Caco-2 (cell line): ENCODE measurements at regions of chrX and their contacts with region 1.

Region 1: DNA sequence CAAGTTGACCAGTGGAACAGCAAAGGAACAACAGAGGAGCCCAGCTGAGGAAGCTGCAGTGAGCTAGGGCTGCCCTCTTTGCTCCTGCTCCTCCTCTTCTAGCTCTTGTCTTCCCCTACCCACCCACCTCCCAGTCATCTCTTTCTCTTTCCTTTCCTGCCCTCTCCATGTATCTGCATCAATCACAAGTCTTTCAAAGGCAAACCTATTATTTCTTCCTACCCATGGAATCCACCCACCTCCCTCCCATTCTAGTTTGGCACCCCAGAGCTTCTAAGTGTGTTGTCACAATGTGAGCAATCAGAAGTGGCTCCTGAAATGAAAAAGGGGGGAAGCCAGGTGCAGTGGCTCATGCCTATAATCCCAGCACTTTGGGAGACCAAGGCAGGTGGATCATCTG is 69.3 kb downstream of the TSC22D3 start:
- DNase-seq: no peak
- H3K4me3 ChIP-seq: no peak overlapping the region
- H3K4me3 Mint-ChIP-seq: no peak overlapping the region
- H3K27ac Mint-ChIP-seq: no peak overlapping the region
- H3K4me1 ChIP-seq: no peaks in the 10 kb centered on the region
- H3K4me1 Mint-ChIP-seq: peaks cover 12% of the 10 kb centered on the region
- H3K27me3 ChIP-seq: no peaks in the 10 kb centered on the region
- H3K27me3 Mint-ChIP-seq: no peaks in the 10 kb centered on the region
- CTCF ChIP-seq: no peak

Region 2: GRCh38 chrX:106903291-106903824 is 803.0 kb before region 1 on chrX and contains the start of gene RIPPLY1:
- CTCF ChIA-PET with region 1: interaction called, 12 read pairs
- POLR2A ChIA-PET with region 1: no interaction called
- intact Hi-C with region 1: no loop called
- DNase-seq: no peak
- H3K4me3 ChIP-seq: no peak within 1 kb of the TSS
- H3K4me3 Mint-ChIP-seq: no peak within 1 kb of the TSS
- H3K27ac Mint-ChIP-seq: no peak within 1 kb of the TSS
- H3K4me1 ChIP-seq: peaks cover 40% of the 10 kb centered on the region
- H3K4me1 Mint-ChIP-seq: peaks cover 17% of the 10 kb centered on the region
- H3K27me3 ChIP-seq: no peaks in the 10 kb centered on the region
- H3K27me3 Mint-ChIP-seq: no peaks in the 10 kb centered on the region
- CTCF ChIP-seq: no peak
- total RNA-seq, gene RIPPLY1: not detected in 2 replicates

Region 3: GRCh38 chrX:107662145-107662544 is 44.2 kb before region 1 on chrX:
- CTCF ChIA-PET with region 1: no interaction called
- POLR2A ChIA-PET with region 1: no interaction called
- intact Hi-C with region 1: no loop called
- DNase-seq: no peak
- H3K4me3 ChIP-seq: no peak overlapping the region
- H3K4me3 Mint-ChIP-seq: no peak overlapping the region
- H3K27ac Mint-ChIP-seq: no peak overlapping the region
- H3K4me1 ChIP-seq: no peaks in the 10 kb centered on the region
- H3K4me1 Mint-ChIP-seq: no peaks in the 10 kb centered on the region
- H3K27me3 ChIP-seq: no peaks in the 10 kb centered on the region
- H3K27me3 Mint-ChIP-seq: no peaks in the 10 kb centered on the region
- CTCF ChIP-seq: no peak

Region 4: GRCh38 chrX:107678957-107679740 is 27.2 kb before region 1 on chrX:
- CTCF ChIA-PET with region 1: no interaction called
- POLR2A ChIA-PET with region 1: no interaction called
- intact Hi-C with region 1: no loop called
- DNase-seq: no peak
- H3K4me3 ChIP-seq: no peak overlapping the region
- H3K4me3 Mint-ChIP-seq: no peak overlapping the region
- H3K27ac Mint-ChIP-seq: no peak overlapping the region
- H3K4me1 ChIP-seq: 0 out of 2 replicates have a peak, but pooled peaks cover 6% of the 10 kb centered on the region
- H3K4me1 Mint-ChIP-seq: peaks cover 8% of the 10 kb centered on the region
- H3K27me3 ChIP-seq: no peaks in the 10 kb centered on the region
- H3K27me3 Mint-ChIP-seq: no peaks in the 10 kb centered on the region
- CTCF ChIP-seq: no peak

Region 5: DNA sequence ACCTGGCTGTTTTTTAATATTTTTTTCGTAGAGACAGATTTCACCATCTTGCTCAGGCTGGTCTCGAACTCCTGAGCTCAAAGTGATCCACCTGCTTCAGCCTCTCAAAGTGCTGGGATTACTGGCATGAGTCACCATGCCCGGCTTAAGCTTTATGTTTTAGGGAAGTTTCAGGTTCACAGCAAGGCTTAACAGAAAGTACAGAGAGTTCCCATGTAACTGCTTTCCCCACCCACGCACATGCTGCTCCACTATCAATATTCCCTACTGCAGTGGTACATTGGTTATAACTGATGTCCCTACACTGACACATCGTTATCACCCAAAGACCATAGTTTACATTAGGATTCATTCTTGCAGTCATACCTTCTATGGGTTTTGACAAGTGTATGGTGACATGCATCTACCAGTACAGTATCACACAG is 15.3 kb before region 1 on chrX:
- CTCF ChIA-PET with region 1: no interaction called
- POLR2A ChIA-PET with region 1: no interaction called
- intact Hi-C with region 1: no loop called
- DNase-seq: no peak
- H3K4me3 ChIP-seq: no peak overlapping the region
- H3K4me3 Mint-ChIP-seq: no peak overlapping the region
- H3K27ac Mint-ChIP-seq: no peak overlapping the region
- H3K4me1 ChIP-seq: no peaks in the 10 kb centered on the region
- H3K4me1 Mint-ChIP-seq: no peaks in the 10 kb centered on the region
- H3K27me3 ChIP-seq: no peaks in the 10 kb centered on the region
- H3K27me3 Mint-ChIP-seq: no peaks in the 10 kb centered on the region
- CTCF ChIP-seq: no peak

Region 6: GRCh38 chrX:107968623-107969022 is 262.3 kb after region 1 on chrX:
- CTCF ChIA-PET with region 1: no interaction called
- POLR2A ChIA-PET with region 1: no interaction called
- intact Hi-C with region 1: no loop called
- DNase-seq: no peak
- H3K4me3 ChIP-seq: no peak overlapping the region
- H3K4me3 Mint-ChIP-seq: no peak overlapping the region
- H3K27ac Mint-ChIP-seq: no peak overlapping the region
- H3K4me1 ChIP-seq: no peaks in the 10 kb centered on the region
- H3K4me1 Mint-ChIP-seq: no peaks in the 10 kb centered on the region
- H3K27me3 ChIP-seq: no peaks in the 10 kb centered on the region
- H3K27me3 Mint-ChIP-seq: peaks cover 8% of the 10 kb centered on the region
- CTCF ChIP-seq: no peak